Activated naive CD4-positive, alpha-beta T cell treated with anti-CD3 and anti-CD28 coated beads for 36 hours (primary cell): ENCODE measurements at regions of chr19 and their contacts with region 1.

Region 1: GRCh38 chr19:1465191-1466016 is 13.6 kb downstream of the C19orf25 start:
- DNase-seq: no peak
- H3K4me3 Mint-ChIP-seq: no peak overlapping the region
- H3K27ac Mint-ChIP-seq: no peak overlapping the region
- H3K4me1 Mint-ChIP-seq: peaks cover 3% of the 10 kb centered on the region
- H3K27me3 Mint-ChIP-seq: peaks cover 9% of the 10 kb centered on the region

Region 2: GRCh38 chr19:1754616-1755466 is 289.4 kb after region 1 on chr19:
- CTCF ChIA-PET with region 1: no interaction called
- intact Hi-C with region 1: loop called (anchors 5 kb)
- DNase-seq: no peak
- H3K4me3 Mint-ChIP-seq: no peak overlapping the region
- H3K27ac Mint-ChIP-seq: no peak overlapping the region
- H3K4me1 Mint-ChIP-seq: peaks cover 16% of the 10 kb centered on the region
- H3K27me3 Mint-ChIP-seq: peaks cover 61% of the 10 kb centered on the region